Psoas muscle (tissue), 8 donors: ENCODE measurements at regions of chr7 and their contacts with region 1.

Region 1: GRCh38 chr7:142711746-142712619 is 37.3 kb upstream of the PRSS1 start:
- DNase-seq: no peak
- ATAC-seq: peak in 1 of 4 donors; percentile 74
- H3K4me3 ChIP-seq: no peak overlapping the region
- H3K27ac ChIP-seq: no peak overlapping the region
- H3K4me1 ChIP-seq: no peaks in the 10 kb centered on the region
- H3K27me3 ChIP-seq: no peaks in the 10 kb centered on the region
- CTCF ChIP-seq: peak; percentile 43

Region 2: GRCh38 chr7:142632291-142633134 is 79.5 kb before region 1 on chr7:
- intact Hi-C with region 1: loop called (anchors 5 to 10 kb)
- DNase-seq: no peak
- ATAC-seq: peak; percentile 66 to 89 (median 76)
- H3K4me3 ChIP-seq: no peak overlapping the region
- H3K27ac ChIP-seq: no peak overlapping the region
- H3K4me1 ChIP-seq: peaks cover 7% of the 10 kb centered on the region
- H3K27me3 ChIP-seq: no peaks in the 10 kb centered on the region
- CTCF ChIP-seq: peak; percentile 81

Region 3: GRCh38 chr7:142754681-142755575 is 42.9 kb after region 1 on chr7:
- intact Hi-C with region 1: no loop called
- DNase-seq: no peak
- ATAC-seq: no peak
- H3K4me3 ChIP-seq: no peak overlapping the region
- H3K27ac ChIP-seq: no peak overlapping the region
- H3K4me1 ChIP-seq: no peaks in the 10 kb centered on the region
- H3K27me3 ChIP-seq: no peaks in the 10 kb centered on the region
- CTCF ChIP-seq: no peak

Region 4: GRCh38 chr7:142927085-142927745 is 215.2 kb after region 1 on chr7:
- intact Hi-C with region 1: no loop called
- DNase-seq: no peak
- ATAC-seq: no peak
- H3K4me3 ChIP-seq: no peak overlapping the region
- H3K27ac ChIP-seq: no peak overlapping the region
- H3K4me1 ChIP-seq: no peaks in the 10 kb centered on the region
- H3K27me3 ChIP-seq: no peaks in the 10 kb centered on the region
- CTCF ChIP-seq: no peak